Right ventricle myocardium inferior (tissue), 1 donor: ENCODE measurements at regions of chr2 and their contacts with region 1.

Region 1: GRCh38 chr2:173066887-173067676 is 8.6 kb upstream of the MAP3K20 start:
- DNase-seq: no peak
- ATAC-seq: no peak

Region 2: DNA sequence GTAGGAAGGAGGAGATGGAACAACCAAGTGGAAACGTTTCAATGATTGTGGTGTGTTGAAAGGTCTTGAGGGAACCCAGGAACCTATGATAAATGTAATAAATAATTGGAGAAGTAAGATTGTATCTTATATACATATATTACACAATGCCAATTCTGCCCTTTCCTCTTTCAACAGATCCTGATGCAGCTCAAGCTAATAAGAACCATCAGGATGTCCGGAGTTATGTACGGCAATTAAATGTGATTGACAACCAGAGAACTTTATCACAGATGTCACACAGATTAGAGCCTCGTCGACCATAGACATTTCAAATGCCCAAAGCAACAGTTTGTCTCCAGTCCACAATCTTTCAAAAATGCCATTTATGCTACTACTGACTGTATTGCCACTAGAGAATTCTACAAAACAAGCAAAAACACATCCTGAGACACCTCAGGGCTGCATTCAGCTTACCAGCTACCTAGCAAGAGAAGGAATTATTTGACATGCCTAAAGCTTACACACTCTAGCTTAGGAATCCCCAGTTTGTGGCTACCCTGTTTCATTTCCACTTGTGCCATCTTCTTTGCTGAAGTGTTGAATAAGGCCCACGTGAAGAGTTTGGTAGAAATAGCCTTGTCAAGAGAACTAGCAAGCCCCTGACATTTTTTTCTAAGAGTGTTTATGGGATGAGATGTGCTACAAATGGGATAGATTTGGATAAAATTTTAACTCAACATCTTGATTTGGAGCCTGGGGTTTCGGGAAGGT is 15.4 kb before region 1 on chr2:
- intact Hi-C with region 1: loop called (anchors 2 kb)
- DNase-seq: no peak
- ATAC-seq: no peak